MCF 10A (cell line): ENCODE measurements at regions of chr6 and their contacts with region 1.

Region 1: GRCh38 chr6:18763086-18763485 is 375.9 kb downstream of the RNF144B start:
- DNase-seq: no peak
- H3K4me3 Mint-ChIP-seq: no peak overlapping the region
- H3K27ac Mint-ChIP-seq: no peak overlapping the region
- H3K4me1 Mint-ChIP-seq: no peaks in the 10 kb centered on the region
- H3K27me3 Mint-ChIP-seq: peaks cover 57% of the 10 kb centered on the region
- CTCF ChIP-seq: no peak

Region 2: GRCh38 chr6:17945111-17945510 is 818.0 kb before region 1 on chr6:
- CTCF ChIA-PET with region 1: no interaction called
- POLR2A ChIA-PET with region 1: no interaction called
- intact Hi-C with region 1: no loop called
- DNase-seq: no peak
- H3K4me3 Mint-ChIP-seq: no peak overlapping the region
- H3K27ac Mint-ChIP-seq: no peak overlapping the region
- H3K4me1 Mint-ChIP-seq: peaks cover 13% of the 10 kb centered on the region
- H3K27me3 Mint-ChIP-seq: no peaks in the 10 kb centered on the region
- CTCF ChIP-seq: no peak

Region 3: DNA sequence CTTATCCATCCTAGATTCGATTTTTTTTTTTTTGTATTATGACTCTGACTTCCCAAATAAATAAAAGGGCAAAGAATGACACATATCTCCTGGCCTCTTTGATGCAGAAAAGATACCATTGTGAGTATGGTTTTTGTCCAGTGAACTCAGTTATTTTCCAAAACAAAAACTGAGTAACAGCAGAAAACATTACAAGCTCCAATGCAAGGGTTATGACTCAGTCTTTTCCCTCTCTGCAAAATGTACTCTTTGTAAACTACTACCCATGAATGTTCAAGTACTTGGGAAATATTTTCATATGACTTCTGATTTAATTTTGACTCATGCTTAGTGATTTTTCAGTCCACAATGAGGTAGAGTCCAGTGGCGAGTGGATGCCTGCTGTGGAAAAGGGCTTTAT is 20.7 kb before region 1 on chr6:
- CTCF ChIA-PET with region 1: no interaction called
- POLR2A ChIA-PET with region 1: no interaction called
- intact Hi-C with region 1: no loop called
- DNase-seq: peak; percentile 41
- H3K4me3 Mint-ChIP-seq: no peak overlapping the region
- H3K27ac Mint-ChIP-seq: peak overlapping the region; percentile 36
- H3K4me1 Mint-ChIP-seq: peaks cover 11% of the 10 kb centered on the region
- H3K27me3 Mint-ChIP-seq: peaks cover 9% of the 10 kb centered on the region
- CTCF ChIP-seq: no peak

Region 4: GRCh38 chr6:18752278-18753068 is 10.6 kb before region 1 on chr6:
- CTCF ChIA-PET with region 1: interaction called, 10 read pairs
- POLR2A ChIA-PET with region 1: no interaction called
- intact Hi-C with region 1: no loop called
- DNase-seq: no peak
- H3K4me3 Mint-ChIP-seq: no peak overlapping the region
- H3K27ac Mint-ChIP-seq: no peak overlapping the region
- H3K4me1 Mint-ChIP-seq: peaks cover 17% of the 10 kb centered on the region
- H3K27me3 Mint-ChIP-seq: peaks cover 61% of the 10 kb centered on the region
- CTCF ChIP-seq: no peak